Activated CD8-positive, alpha-beta T cell treated with anti-CD3 and anti-CD28 coated beads, Interleukin-2, amount 10 ng/mL, durations not matched to agents 7 days and 5 days (primary cell): ENCODE measurements at regions of chr1 and their contacts with region 1.

Region 1: DNA sequence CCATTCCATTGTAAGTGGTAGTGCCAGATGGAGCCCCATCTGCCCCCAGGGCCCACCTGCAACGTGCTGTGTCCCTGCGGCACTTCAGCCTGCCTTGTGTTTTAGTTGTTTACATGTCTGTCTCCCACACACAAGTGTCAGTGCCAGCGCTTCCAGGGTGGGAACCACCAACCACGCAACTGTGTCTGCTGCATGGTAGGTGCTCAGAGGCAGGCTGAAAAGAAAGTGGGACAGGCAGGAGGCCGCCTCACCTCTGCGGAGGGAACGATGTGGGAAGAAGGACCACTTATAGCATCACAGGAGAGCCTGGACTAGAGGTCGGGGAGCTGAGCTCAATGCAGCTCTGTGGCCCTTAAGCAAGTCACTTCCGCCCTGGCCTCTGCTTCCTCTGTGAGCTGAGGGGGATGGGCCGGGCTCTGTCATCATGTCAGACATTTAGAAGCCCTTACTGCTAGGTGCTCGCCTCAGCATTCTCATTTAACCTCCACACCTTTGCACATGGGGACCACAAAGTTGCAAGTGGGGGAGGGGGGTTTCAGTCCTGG is 17.9 kb downstream of the SLC9A1 start:
- DNase-seq: peak; percentile 93
- ATAC-seq: peak; percentile 92
- H3K4me3 Mint-ChIP-seq: peak overlapping the region; percentile 82
- H3K27ac Mint-ChIP-seq: peak overlapping the region; percentile 99
- H3K4me1 Mint-ChIP-seq: peaks cover 58% of the 10 kb centered on the region
- H3K27me3 Mint-ChIP-seq: no peaks in the 10 kb centered on the region

Region 2: DNA sequence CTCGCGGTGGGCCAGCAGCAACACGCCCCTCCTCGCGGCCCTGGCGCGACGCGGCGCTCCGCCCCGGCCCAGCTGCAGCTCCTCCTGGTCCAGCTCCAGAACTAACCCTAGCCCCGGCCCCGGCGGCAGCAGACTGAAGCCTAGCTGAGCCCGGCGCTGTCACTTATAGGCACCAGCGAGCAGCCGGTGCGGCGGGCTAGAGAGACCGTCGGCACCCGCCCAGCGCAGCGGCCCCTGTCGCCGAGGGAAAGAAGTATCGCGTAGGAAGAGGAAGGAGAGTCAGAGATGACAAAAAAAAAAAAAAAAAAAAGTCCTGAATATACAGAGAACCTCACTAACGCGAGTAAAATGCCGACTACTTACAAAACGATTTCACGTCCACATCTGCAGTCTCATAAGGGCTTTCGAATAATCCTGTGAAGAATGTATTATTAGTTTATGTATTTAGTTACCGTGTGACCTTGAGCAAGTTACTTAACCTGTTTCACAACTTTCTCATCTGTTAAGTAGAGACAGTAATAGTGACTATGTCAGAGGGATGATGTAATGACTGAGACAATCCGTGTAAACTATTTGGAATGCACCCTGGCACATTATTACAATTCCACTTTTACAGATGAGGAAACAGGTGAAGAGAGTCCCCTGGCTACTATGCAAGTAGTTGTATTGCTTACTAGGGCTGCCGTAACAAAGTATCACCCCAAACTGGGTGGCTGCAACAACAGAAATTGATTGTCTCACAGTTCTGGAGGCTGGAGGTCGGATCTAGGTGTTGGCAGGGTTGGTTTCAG is 18.1 kb after region 1 on chr1 and contains the start of gene SLC9A1:
- CTCF ChIA-PET with region 1: interaction called, 110 read pairs
- POLR2A ChIA-PET with region 1: interaction called, 50 read pairs
- DNase-seq: peak; percentile 92
- ATAC-seq: peak; percentile 90
- H3K4me3 Mint-ChIP-seq: peak within 1 kb of the TSS; percentile 81
- H3K27ac Mint-ChIP-seq: peak within 1 kb of the TSS; percentile 94
- H3K4me1 Mint-ChIP-seq: peaks cover 44% of the 10 kb centered on the region
- H3K27me3 Mint-ChIP-seq: no peaks in the 10 kb centered on the region
- total RNA-seq, gene SLC9A1: 28.3 to 29.0 TPM

Region 3: GRCh38 chr1:27203946-27204345 is 66.9 kb after region 1 on chr1:
- CTCF ChIA-PET with region 1: no interaction called
- POLR2A ChIA-PET with region 1: no interaction called
- DNase-seq: no peak
- ATAC-seq: no peak
- H3K4me3 Mint-ChIP-seq: no peak overlapping the region
- H3K27ac Mint-ChIP-seq: no peak overlapping the region
- H3K4me1 Mint-ChIP-seq: no peaks in the 10 kb centered on the region
- H3K27me3 Mint-ChIP-seq: peaks cover 6% of the 10 kb centered on the region

Region 4: DNA sequence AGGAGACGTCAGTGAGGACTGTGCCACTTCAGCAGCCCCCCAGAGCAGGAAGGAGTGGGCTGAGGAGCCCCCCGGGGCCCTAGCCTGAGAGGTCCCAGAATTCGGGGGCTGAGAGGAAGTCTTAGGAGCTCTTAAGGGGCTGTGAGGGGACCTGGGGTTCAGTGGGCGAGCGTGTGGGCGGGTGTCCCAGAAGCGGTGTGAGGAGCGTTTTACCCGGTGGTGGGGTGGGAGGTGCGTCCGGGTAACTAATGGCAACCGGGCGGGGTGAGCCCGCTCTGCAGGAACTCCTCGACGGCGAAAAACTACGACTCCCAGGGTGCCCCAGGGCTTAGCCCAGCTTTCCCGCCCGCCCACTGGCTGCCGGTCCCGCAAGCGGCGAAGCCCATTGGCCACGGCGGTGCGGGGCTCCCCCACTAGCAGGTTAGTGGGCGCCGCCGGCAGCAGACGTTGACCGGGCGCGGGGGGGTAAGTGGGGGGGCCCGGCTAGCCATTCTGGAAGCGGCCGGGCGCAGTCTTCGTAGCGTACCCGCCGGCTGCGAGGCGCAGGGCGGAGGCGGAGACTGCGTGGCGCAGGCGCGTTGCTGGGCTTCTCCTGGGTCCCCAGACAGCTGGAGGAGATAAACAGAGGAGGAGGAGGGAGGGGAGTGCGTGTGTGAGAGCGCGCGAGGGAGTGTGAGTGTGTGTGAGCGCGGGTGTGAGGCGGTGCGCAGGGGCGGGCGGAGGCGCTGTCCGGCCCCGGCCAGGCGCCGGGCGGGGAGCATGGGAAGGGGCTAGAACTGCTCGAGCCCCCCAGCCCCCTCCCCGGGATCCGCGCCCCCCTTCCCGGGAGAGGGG is 97.2 kb after region 1 on chr1 and contains the start of gene WDTC1:
- CTCF ChIA-PET with region 1: no interaction called
- POLR2A ChIA-PET with region 1: no interaction called
- DNase-seq: peak; percentile 98
- ATAC-seq: peak; percentile 95
- H3K4me3 Mint-ChIP-seq: peak within 1 kb of the TSS; percentile 96
- H3K27ac Mint-ChIP-seq: peak within 1 kb of the TSS; percentile 94
- H3K4me1 Mint-ChIP-seq: peaks cover 32% of the 10 kb centered on the region
- H3K27me3 Mint-ChIP-seq: no peaks in the 10 kb centered on the region
- total RNA-seq, gene WDTC1: 24.7 to 25.0 TPM